Endothelial cell of umbilical vein (primary cell): ENCODE measurements at regions of chr20 and their contacts with region 1.

Region 1: DNA sequence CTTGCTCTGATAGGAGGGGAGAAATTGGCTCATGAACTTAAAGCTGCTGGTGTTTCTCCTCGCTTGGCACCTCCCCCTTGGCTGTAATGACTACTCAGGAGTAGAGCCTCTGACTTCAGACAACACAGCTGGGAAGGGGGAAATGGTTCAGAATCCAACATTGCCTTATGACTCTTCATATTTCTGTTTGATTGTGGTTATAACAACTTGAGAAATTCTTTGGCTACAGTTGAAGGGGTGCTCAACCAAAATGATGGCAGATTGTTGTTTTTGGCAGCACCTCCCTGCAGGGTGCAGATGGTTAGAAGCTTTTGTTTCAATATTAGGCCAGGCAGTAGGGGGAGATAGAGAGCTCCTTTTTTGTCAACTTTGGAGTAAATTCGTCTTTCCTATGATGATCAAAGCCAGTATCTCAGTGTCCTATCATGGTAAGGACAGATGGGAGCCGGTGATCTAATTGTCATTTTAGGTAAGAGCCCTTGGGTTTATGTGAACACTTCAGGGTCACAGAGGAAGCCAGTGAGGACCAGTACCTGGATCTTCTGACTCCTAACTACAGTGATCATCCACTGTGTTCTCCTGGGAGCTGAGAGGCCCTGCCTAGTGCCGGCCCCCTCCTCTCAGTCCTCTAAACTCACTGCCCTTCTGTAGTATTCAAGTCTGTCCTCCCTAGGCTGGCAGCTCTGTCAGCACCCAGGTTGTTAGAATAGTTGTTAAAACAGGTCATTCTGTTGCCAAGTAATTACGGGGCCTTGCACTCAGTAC is 39.9 kb downstream of the RPRD1B start:
- DNase-seq: peak; percentile 96
- H3K4me3 ChIP-seq: no peak overlapping the region
- H3K27ac ChIP-seq: peak overlapping the region; percentile 35
- H3K4me1 ChIP-seq: peaks cover 14% of the 10 kb centered on the region
- H3K27me3 ChIP-seq: no peaks in the 10 kb centered on the region
- CTCF ChIP-seq: peak; percentile 68 to 82
- POLR2A ChIP-seq: peak; percentile 24

Region 2: GRCh38 chr20:37558759-37559158 is 514.7 kb before region 1 on chr20:
- CTCF ChIA-PET with region 1: no interaction called
- POLR2A ChIA-PET with region 1: no interaction called
- dilution Hi-C with region 1: no loop called
- intact Hi-C with region 1: no loop called
- DNase-seq: no peak
- H3K4me3 ChIP-seq: no peak overlapping the region
- H3K27ac ChIP-seq: no peak overlapping the region
- H3K4me1 ChIP-seq: no peaks in the 10 kb centered on the region
- H3K27me3 ChIP-seq: peaks cover 7 to 11% of the 10 kb centered on the region in 2 experiments
- CTCF ChIP-seq: no peak
- POLR2A ChIP-seq: no peak

Region 3: GRCh38 chr20:38084400-38084951 is 11.0 kb after region 1 on chr20:
- CTCF ChIA-PET with region 1: interaction called, 53 read pairs
- POLR2A ChIA-PET with region 1: no interaction called
- dilution Hi-C with region 1: no loop called
- intact Hi-C with region 1: loop called (anchors 1 kb)
- DNase-seq: peak; percentile 91
- H3K4me3 ChIP-seq: no peak overlapping the region
- H3K27ac ChIP-seq: peak overlapping the region; percentile 63
- H3K4me1 ChIP-seq: peaks cover 21% of the 10 kb centered on the region
- H3K27me3 ChIP-seq: no peaks in the 10 kb centered on the region
- CTCF ChIP-seq: no peak
- POLR2A ChIP-seq: no peak

Region 4: DNA sequence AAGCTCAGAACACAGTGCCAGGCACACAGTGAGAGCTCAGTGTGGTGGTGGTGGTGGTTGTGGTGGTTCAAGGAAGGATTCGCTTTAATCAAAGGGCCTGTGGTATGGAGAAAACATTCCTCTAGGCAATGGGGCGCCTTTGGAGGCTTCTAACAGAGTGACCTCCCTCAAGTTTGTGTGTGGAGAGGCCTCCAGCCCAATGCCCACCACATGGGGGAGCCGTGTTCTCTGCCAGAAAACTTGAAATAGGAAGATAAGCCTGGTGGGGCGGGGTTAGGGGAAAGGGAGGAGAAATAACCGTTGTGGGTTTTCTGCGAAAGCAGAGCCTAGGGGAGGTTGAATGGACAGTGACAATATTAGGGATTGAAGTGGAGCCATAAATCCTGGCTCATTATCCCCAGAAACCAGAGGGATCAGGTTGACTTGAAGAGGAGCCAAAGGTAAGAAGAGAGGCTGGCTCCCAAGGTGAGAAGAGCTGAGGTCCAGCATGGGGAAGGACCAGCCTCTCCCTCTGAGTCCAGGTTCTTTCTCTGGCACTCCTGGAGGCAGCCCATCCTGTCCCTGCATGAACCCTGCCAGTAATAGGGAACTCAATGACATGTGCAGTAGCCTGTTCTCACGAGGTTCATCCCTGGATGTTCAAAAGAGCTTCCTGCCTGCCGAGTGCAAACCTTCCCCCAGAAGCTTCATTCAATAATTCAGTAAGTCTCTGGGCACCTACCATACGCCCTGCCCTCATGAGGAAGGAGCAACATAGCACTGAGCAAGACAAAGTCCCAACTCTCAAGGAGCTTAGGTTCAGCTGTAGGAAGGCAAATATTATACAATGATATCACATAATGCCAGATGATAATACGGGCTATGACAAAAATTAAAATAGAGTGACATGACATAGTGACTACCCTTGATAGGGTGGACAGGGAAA is 40.2 kb after region 1 on chr20:
- CTCF ChIA-PET with region 1: interaction called, 43 read pairs
- POLR2A ChIA-PET with region 1: no interaction called
- dilution Hi-C with region 1: no loop called
- intact Hi-C with region 1: no loop called
- DNase-seq: no peak
- H3K4me3 ChIP-seq: no peak overlapping the region
- H3K27ac ChIP-seq: peak overlapping the region; percentile 10
- H3K4me1 ChIP-seq: peaks cover 61% of the 10 kb centered on the region
- H3K27me3 ChIP-seq: no peaks in the 10 kb centered on the region
- CTCF ChIP-seq: peak; percentile 27 to 50
- POLR2A ChIP-seq: no peak

Region 5: GRCh38 chr20:38134387-38135270 is 61.1 kb after region 1 on chr20:
- CTCF ChIA-PET with region 1: interaction called, 104 read pairs
- POLR2A ChIA-PET with region 1: interaction called, 6 read pairs
- dilution Hi-C with region 1: no loop called
- intact Hi-C with region 1: loop called (anchors 1 kb)
- DNase-seq: peak; percentile 94
- H3K4me3 ChIP-seq: no peak overlapping the region
- H3K27ac ChIP-seq: peak overlapping the region; percentile 88
- H3K4me1 ChIP-seq: peaks cover 50% of the 10 kb centered on the region
- H3K27me3 ChIP-seq: no peaks in the 10 kb centered on the region
- CTCF ChIP-seq: no peak
- POLR2A ChIP-seq: peak; percentile 91

Region 6: DNA sequence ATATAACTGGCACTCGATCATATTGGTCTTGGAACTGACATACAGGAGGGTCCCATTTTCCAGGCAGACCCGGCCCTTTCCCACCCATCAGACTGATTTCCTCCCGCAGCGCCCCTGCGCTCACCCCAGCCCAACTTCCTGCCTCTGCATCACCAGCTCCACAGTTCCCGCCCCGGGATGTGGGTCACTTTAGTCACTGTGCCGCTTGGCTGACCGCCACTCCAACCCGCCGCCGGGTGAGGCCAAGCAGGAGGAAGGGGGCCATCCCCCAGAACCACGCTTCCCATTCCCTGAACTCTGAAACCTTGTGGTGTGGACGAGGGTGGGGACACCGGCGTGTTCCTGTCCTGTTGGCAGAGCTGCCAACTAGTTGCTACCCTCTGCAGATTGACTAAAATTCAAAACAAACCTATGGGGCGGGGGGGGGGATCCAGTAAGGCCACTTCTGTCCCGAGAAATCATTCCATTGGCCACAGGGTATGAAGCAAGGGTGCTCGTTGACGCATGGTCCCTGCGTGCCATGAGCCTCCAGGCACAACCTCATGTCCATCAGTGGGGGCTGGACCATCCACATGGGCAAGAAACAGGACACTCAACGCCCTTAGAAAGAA is 79.2 kb after region 1 on chr20:
- CTCF ChIA-PET with region 1: interaction called, 22 read pairs
- POLR2A ChIA-PET with region 1: no interaction called
- dilution Hi-C with region 1: no loop called
- intact Hi-C with region 1: no loop called
- DNase-seq: peak; percentile 96
- H3K4me3 ChIP-seq: peak overlapping the region in 1 of 3 experiments; percentile 15
- H3K27ac ChIP-seq: peak overlapping the region; percentile 100
- H3K4me1 ChIP-seq: peaks cover 90% of the 10 kb centered on the region
- H3K27me3 ChIP-seq: no peaks in the 10 kb centered on the region
- CTCF ChIP-seq: no peak
- POLR2A ChIP-seq: no peak

Region 7: GRCh38 chr20:38165089-38165989 is 91.8 kb after region 1 on chr20 and contains the start of gene TGM2:
- CTCF ChIA-PET with region 1: interaction called, 35 read pairs
- POLR2A ChIA-PET with region 1: no interaction called
- dilution Hi-C with region 1: no loop called
- intact Hi-C with region 1: loop called (anchors 1 kb)
- DNase-seq: peak; percentile 88
- H3K4me3 ChIP-seq: peak within 1 kb of the TSS; percentile 26 to 96 (median 68)
- H3K27ac ChIP-seq: peak within 1 kb of the TSS; percentile 96
- H3K4me1 ChIP-seq: peaks cover 81% of the 10 kb centered on the region
- H3K27me3 ChIP-seq: no peaks in the 10 kb centered on the region
- CTCF ChIP-seq: peak; percentile 83 to 89
- POLR2A ChIP-seq: peak; percentile 98
- total RNA-seq, gene TGM2: 708 and 868 TPM in 2 replicates

Region 8: GRCh38 chr20:38412877-38413577 is 339.5 kb after region 1 on chr20:
- CTCF ChIA-PET with region 1: interaction called, 10 read pairs
- POLR2A ChIA-PET with region 1: no interaction called
- dilution Hi-C with region 1: no loop called
- intact Hi-C with region 1: no loop called
- DNase-seq: no peak
- H3K4me3 ChIP-seq: no peak overlapping the region
- H3K27ac ChIP-seq: no peak overlapping the region
- H3K4me1 ChIP-seq: no peaks in the 10 kb centered on the region
- H3K27me3 ChIP-seq: no peaks in the 10 kb centered on the region
- CTCF ChIP-seq: no peak
- POLR2A ChIP-seq: no peak